ENCODE measurements at regions of chr11 and their contacts with region 1.

Region 1: GRCh38 chr11:124644426-124645280 is 22.0 kb downstream of the TBRG1 start:
- DNase-seq: peak; percentile 50
- H3K4me3 ChIP-seq: peak overlapping the region in 1 of 3 experiments; percentile 13
- H3K27ac ChIP-seq: no peak overlapping the region
- H3K4me1 ChIP-seq: peaks cover 16% of the 10 kb centered on the region
- H3K27me3 ChIP-seq: no peaks in the 10 kb centered on the region
- CTCF ChIP-seq: peak; percentile 80 to 86

Region 2: DNA sequence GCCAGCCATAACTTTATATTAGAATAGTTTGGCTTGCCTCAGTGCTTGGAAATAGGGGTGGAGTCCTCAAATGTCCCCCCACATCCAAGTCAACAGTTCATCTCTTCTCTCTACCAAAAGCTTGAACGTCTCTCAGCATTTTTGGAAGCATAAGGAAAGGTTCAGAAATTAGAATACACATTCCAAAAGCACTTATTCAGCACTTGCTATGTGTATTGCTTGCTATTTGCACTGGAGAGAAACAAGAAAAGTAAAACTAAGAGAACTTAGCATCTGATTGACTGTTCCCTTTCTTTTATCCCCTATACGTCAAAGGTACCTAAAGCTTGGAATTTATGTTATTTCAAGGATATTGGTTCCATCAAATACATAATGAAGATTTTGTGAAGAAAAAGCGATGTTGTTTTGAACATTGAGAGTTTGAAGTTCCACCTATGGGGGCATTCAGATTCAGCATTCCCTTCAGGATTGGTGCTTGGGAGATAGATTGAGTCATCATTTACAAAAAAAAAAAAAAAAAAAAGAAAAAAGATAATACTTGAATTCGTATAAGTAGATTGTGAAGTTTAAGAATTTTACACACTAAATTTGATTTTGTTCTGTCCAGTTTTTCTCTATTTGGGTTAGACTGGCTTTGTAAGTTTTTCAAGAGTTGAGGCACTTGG is 20.7 kb before region 1 on chr11:
- CTCF ChIA-PET with region 1: no interaction called
- dilution Hi-C with region 1: no loop called
- in situ Hi-C with region 1: no loop called
- intact Hi-C with region 1: no loop called
- DNase-seq: no peak
- H3K4me3 ChIP-seq: peak overlapping the region; percentile 71 to 97 (median 96)
- H3K27ac ChIP-seq: peak overlapping the region; percentile 78
- H3K4me1 ChIP-seq: peaks cover 19% of the 10 kb centered on the region
- H3K27me3 ChIP-seq: no peaks in the 10 kb centered on the region
- CTCF ChIP-seq: no peak

Region 3: DNA sequence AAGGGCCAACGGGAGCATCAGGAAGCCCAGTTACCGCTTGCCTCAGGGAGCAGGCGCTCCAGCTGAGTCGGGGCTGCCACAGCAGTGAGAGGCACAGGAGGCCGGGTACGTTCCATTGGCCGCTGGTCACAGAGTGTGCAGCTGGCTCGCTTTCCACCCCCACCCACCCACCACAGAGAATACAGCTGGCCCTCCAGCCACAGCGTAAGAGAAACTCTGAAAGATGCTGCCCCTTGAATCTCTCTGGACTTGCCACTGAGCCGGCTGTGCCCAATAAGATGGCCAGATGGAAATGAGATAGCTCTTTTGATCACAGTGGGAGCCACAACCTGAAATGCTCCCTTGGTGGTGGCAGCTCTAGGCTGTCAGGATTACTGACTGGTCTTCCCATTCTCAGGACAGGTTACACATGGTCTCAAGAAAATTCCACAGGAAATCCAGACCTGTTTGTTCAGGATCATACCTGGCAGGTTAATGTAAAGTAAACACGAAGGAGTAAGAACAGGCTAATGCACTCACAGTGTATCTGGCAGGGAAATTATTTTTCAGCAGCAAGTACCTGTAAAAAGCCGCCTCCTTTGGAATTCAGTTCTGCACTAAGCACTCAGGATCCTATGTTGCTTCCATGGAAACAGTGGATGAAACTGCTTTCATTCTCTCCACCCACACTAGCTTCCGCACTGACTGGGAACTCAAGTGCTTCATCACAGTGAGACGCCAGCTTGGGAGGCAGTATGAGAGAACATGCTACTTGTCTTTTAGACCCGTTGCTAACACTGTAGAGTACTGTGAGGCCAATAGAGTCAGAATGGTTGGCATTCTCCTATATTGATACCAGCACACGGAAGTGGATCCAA is 12.3 kb after region 1 on chr11:
- CTCF ChIA-PET with region 1: interaction called, 12 read pairs
- dilution Hi-C with region 1: no loop called
- in situ Hi-C with region 1: no loop called
- intact Hi-C with region 1: no loop called
- DNase-seq: peak; percentile 66
- H3K4me3 ChIP-seq: no peak overlapping the region
- H3K27ac ChIP-seq: peak overlapping the region; percentile 38
- H3K4me1 ChIP-seq: peaks cover 13% of the 10 kb centered on the region
- H3K27me3 ChIP-seq: no peaks in the 10 kb centered on the region
- CTCF ChIP-seq: no peak

Region 4: GRCh38 chr11:124739479-124740276 is 95.0 kb after region 1 on chr11 and contains the start of gene NRGN:
- CTCF ChIA-PET with region 1: no interaction called
- dilution Hi-C with region 1: loop called (anchors 5 kb)
- in situ Hi-C with region 1: no loop called
- intact Hi-C with region 1: no loop called
- DNase-seq: peak; percentile 81
- H3K4me3 ChIP-seq: peak within 1 kb of the TSS; percentile 50 to 62 (median 52)
- H3K27ac ChIP-seq: no peak within 1 kb of the TSS
- H3K4me1 ChIP-seq: peaks cover 12% of the 10 kb centered on the region
- H3K27me3 ChIP-seq: no peaks in the 10 kb centered on the region
- CTCF ChIP-seq: no peak
- total RNA-seq, gene NRGN: 3.8 TPM in 1 of 2 donors, not detected in the other

Region 5: DNA sequence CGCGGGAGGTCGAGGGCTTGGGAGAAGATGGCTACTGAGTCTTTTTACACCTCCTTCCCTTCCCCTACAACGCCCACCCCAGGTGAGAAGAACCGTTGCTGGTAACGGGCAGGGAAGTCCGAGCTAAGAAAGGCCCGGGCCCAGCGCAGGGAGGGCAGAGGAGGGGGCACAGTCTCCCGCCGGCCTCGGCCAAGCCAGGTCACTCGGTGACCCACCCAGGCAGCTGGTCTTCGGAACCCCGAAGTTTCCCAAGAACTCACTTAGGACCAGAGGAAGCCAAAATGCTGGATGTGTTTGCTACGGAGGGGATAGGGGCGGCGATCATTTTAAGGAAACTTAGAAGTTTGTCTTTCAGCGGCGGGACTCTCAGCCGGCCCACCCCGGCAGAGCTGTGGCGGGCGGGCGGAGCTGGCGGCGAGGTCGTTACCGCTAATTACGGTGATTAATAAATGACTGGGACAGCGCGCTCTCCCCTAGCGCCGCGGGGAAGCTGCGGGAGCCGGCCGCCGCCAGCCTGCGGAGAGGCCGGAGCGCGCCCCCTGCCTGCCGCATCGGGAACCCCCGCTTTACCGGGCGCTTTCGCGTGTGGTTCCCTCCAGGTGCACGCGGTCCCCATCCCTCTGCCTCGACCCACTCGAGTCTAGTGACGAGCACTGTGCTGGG is 221.4 kb after region 1 on chr11:
- CTCF ChIA-PET with region 1: no interaction called
- dilution Hi-C with region 1: no loop called
- in situ Hi-C with region 1: no loop called
- intact Hi-C with region 1: loop called (anchors 1 kb)
- DNase-seq: no peak
- H3K4me3 ChIP-seq: peak overlapping the region in 1 of 3 experiments; percentile 11
- H3K27ac ChIP-seq: no peak overlapping the region
- H3K4me1 ChIP-seq: peaks cover 25% of the 10 kb centered on the region
- H3K27me3 ChIP-seq: peaks cover 68% of the 10 kb centered on the region
- CTCF ChIP-seq: peak; percentile 39 to 75

Measured in mammary epithelial cell (primary cell).